ENCODE measurements at regions of chr10 and their contacts with region 1.

Region 1: DNA sequence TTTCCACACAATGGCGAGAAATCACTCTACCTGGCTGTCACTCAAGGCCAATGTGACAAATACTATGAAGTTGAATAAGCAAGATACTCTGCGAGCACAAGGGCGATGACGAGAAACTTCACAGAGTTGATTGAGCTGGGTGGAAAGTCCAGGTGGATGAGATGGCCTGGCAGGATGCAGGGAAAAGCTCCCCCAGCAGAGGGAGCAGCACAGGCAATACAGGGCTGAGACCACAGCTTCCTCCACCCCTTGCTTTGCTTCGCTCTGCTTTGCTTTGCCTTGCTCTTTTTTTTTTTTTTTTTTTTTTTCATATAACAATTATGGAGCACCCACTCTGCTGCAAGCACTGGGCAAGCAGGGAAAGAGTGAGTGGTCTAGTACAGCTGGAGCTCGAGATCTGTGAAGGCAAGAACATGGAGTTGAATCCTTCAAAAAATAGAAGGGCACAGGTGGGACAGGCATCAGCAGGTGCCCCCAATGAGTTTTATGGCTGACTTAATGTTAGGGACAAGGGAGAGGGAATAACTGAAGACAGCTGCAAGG is 88.3 kb downstream of the CABCOCO1 start:
- DNase-seq: peak; percentile 55 to 67 (median 65)
- H3K4me3 ChIP-seq: no peak overlapping the region
- H3K4me3 Mint-ChIP-seq: peak overlapping the region in 3 of 8 donors; percentile 24 to 30 (median 29)
- H3K27ac ChIP-seq: no peak overlapping the region
- H3K27ac Mint-ChIP-seq: peak overlapping the region in 2 of 7 donors; percentile 57 to 64
- H3K4me1 ChIP-seq: peaks cover 20% of the 10 kb centered on the region
- H3K4me1 Mint-ChIP-seq: peaks cover 16 to 29% (median 21%) of the 10 kb centered on the region in 4 donors
- H3K27me3 ChIP-seq: no peaks in the 10 kb centered on the region
- H3K27me3 Mint-ChIP-seq: no peaks in the 10 kb centered on the region

Region 2: GRCh38 chr10:61821153-61821552 is 70.2 kb after region 1 on chr10:
- CTCF ChIA-PET with region 1: interaction called, 81 read pairs
- POLR2A ChIA-PET with region 1: interaction called, 3 read pairs
- intact Hi-C with region 1: loop called (anchors 1 kb)
- DNase-seq: no peak
- H3K4me3 ChIP-seq: no peak overlapping the region
- H3K4me3 Mint-ChIP-seq: no peak overlapping the region
- H3K27ac ChIP-seq: no peak overlapping the region
- H3K27ac Mint-ChIP-seq: no peak overlapping the region
- H3K4me1 ChIP-seq: no peaks in the 10 kb centered on the region
- H3K4me1 Mint-ChIP-seq: no peaks in the 10 kb centered on the region
- H3K27me3 ChIP-seq: no peaks in the 10 kb centered on the region
- H3K27me3 Mint-ChIP-seq: no peaks in the 10 kb centered on the region

Region 3: GRCh38 chr10:61860964-61861758 is 110.2 kb after region 1 on chr10:
- CTCF ChIA-PET with region 1: interaction called, 10 read pairs
- POLR2A ChIA-PET with region 1: interaction called, 22 read pairs
- intact Hi-C with region 1: no loop called
- DNase-seq: no peak
- H3K4me3 ChIP-seq: no peak overlapping the region
- H3K4me3 Mint-ChIP-seq: no peak overlapping the region
- H3K27ac ChIP-seq: no peak overlapping the region
- H3K27ac Mint-ChIP-seq: no peak overlapping the region
- H3K4me1 ChIP-seq: no peaks in the 10 kb centered on the region
- H3K4me1 Mint-ChIP-seq: no peaks in the 10 kb centered on the region
- H3K27me3 ChIP-seq: no peaks in the 10 kb centered on the region
- H3K27me3 Mint-ChIP-seq: no peaks in the 10 kb centered on the region

Region 4: GRCh38 chr10:62149621-62150020 is 398.6 kb after region 1 on chr10:
- CTCF ChIA-PET with region 1: no interaction called
- POLR2A ChIA-PET with region 1: no interaction called
- intact Hi-C with region 1: loop called (anchors 5 kb)
- DNase-seq: no peak
- H3K4me3 ChIP-seq: no peak overlapping the region
- H3K4me3 Mint-ChIP-seq: no peak overlapping the region
- H3K27ac ChIP-seq: no peak overlapping the region
- H3K27ac Mint-ChIP-seq: no peak overlapping the region
- H3K4me1 ChIP-seq: no peaks in the 10 kb centered on the region
- H3K4me1 Mint-ChIP-seq: peaks cover 3 to 7% (median 6%) of the 10 kb centered on the region in 4 donors
- H3K27me3 ChIP-seq: no peaks in the 10 kb centered on the region
- H3K27me3 Mint-ChIP-seq: no peaks in the 10 kb centered on the region